ENCODE measurements at regions of chr20 and their contacts with region 1.

Region 1: DNA sequence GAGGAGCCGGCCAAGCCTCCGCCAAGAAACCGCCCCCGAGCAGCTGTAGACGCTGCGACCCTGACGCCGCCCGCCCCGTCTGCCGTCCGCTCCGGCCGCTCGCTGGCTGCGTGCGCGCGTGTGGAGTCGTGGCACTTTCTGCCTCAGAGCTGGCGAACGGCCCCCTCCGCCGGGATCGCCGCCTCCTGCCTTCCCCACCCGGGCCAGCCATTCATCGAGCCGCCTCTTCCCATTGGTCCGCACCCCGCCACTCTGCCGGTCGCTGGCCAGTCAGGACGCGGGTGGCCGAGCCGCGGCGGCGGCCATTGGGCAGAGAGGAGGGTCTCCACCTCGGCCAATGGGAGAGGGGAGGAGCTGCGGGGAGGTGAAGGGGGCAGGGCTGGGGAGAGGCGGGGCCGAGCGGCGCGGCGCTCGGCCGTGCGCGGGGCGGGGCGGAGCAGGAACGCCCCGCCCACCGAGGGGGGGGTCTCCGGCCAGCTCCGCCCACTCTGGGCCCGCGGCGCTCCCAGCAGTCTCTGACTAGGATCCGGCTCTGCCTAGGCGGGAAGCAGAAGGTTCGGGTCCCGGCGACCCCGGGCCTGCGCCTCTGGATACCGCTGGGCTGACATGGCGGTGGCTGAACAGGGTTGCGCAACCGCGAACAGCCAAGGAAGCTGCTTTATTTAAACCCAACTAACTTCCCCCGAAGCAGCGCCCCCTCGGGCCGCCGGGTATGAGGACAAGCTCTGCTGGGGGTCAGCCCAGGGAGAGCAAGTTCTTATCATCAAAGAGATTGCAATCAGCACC is at the start of gene RRBP1:
- DNase-seq: peak; percentile 97
- H3K4me3 Mint-ChIP-seq: peak within 1 kb of the TSS; percentile 88
- H3K27ac Mint-ChIP-seq: peak within 1 kb of the TSS; percentile 91
- H3K4me1 Mint-ChIP-seq: peaks cover 24% of the 10 kb centered on the region
- H3K27me3 Mint-ChIP-seq: peaks cover 26% of the 10 kb centered on the region
- total RNA-seq, gene RRBP1: 54.8 and 56.0 TPM in 2 replicates

Region 2: DNA sequence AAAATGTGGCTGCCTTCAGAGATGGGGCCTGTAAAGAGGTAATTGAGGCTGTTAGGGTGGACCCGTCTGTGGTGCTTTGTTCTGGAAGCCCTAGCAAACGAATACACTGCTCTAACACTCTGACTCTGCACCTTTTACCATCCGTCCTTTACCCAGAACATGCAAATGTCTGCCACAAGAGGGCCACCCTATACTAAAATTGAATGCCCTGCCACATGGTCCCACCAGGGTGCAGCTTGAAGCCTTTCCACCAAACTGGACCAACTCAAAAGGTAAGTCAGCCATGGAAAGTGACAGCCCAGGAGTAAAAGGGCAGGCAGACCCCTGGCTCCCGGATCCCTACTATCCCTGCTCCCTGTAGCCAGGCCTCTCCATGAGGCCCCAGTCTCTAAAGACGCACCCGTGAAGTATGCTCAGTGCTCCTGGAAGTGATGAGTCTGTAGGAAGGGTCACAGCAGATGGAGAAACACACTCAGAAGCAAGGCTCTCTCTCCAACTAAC is 145.3 kb before region 1 on chr20:
- intact Hi-C with region 1: loop called (anchors 1 kb)
- DNase-seq: peak; percentile 63
- H3K4me3 Mint-ChIP-seq: no peak overlapping the region
- H3K27ac Mint-ChIP-seq: no peak overlapping the region
- H3K4me1 Mint-ChIP-seq: peaks cover 40% of the 10 kb centered on the region
- H3K27me3 Mint-ChIP-seq: peaks cover 24% of the 10 kb centered on the region

Region 3: GRCh38 chr20:17611540-17612286 is 70.6 kb before region 1 on chr20:
- intact Hi-C with region 1: loop called (anchors 5 kb)
- DNase-seq: no peak
- H3K4me3 Mint-ChIP-seq: no peak overlapping the region
- H3K27ac Mint-ChIP-seq: peak overlapping the region; percentile 97
- H3K4me1 Mint-ChIP-seq: peaks cover 27% of the 10 kb centered on the region
- H3K27me3 Mint-ChIP-seq: no peaks in the 10 kb centered on the region

Region 4: DNA sequence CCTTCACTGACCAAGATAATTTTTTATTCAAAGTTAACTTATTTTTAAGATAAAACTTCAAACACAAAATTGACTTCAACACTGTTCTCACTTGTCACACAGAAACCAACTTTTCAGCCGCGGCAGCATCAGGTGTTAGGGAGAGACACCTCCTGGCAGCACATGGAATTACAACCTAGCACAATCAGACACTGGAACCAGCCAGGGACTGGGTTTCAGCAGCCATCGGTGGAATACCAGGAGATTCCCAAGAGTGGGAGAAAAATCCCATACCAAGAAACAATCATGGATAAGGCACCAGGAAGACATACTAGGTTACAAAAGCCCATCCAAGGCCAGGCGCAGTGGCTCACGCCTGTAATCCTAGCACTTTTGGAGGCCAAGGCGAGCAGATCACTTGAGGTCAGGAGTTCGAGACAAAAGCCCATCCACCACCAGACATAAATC is 216.3 kb after region 1 on chr20:
- intact Hi-C with region 1: loop called (anchors 1 kb)
- DNase-seq: peak; percentile 44
- H3K4me3 Mint-ChIP-seq: no peak overlapping the region
- H3K27ac Mint-ChIP-seq: no peak overlapping the region
- H3K4me1 Mint-ChIP-seq: peaks cover 37% of the 10 kb centered on the region
- H3K27me3 Mint-ChIP-seq: peaks cover 17% of the 10 kb centered on the region

Region 5: GRCh38 chr20:18466894-18467730 is 784.8 kb after region 1 on chr20 and contains the starts of genes DZANK1 and POLR3F:
- intact Hi-C with region 1: loop called (anchors 1 kb)
- DNase-seq: peak; percentile 90
- H3K4me3 Mint-ChIP-seq: peak within 1 kb of the TSS; percentile 99
- H3K27ac Mint-ChIP-seq: peak within 1 kb of the TSS; percentile 92
- H3K4me1 Mint-ChIP-seq: peaks cover 31% of the 10 kb centered on the region
- H3K27me3 Mint-ChIP-seq: no peaks in the 10 kb centered on the region
- total RNA-seq, gene DZANK1: 1.1 and 1.8 TPM in 2 replicates
- total RNA-seq, gene POLR3F: 13.4 and 16.6 TPM in 2 replicates

Measured in activated T-helper 1 cell treated with anti-CD3 and anti-CD28 coated beads, Interleukin-12 subunit alpha, Interleukin-12 subunit beta, Interleukin-2, Interleukin-4 antibody, amounts not matched to agents 30 ng/mL and 10 ng/mL and 1 ng/mL, durations not matched to agents 14 hours and 24 hours and 36 hours (primary cell).